ENCODE measurements at regions of chr13 and their contacts with region 1.

Region 1: DNA sequence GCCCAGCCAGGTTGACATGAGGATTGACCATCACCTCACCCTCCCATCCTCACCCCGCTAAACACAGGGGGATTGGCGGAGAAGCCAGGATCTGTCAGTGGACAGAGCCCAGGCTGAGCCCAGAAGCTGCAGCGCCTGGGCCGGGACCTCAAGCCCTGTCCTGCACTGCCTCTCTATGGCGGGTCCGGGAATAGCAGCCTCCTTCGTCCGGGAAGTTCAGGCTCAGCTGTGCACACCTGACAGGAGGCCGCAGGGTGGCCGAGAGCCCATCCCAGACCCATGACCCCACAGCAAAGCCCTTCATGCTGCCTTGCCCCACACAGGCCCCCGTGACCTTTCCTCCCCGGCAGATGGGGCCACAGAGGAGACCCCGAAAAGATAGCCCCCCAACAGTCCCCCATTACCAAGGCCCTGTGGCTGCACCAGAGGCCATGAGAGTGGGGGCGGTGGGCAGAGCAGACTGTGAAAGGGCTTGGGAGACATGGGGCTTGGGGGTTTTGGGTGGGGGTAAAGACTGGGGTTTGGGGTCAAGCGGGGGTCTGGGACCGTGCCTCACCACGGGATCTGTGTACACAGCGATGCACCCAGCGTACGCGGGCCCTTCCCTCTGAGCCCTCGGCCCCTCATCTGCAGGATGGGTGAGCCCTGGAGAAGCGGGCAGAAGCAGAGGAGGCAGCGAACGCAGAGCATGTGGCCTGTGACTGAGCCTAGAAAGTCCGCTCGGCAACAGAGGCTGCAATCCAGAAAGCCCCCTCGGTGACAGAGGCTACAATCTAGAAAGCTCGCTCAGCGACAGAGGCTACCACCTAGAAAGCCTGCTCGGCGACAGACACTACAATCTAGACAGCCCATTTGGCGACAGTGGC is 68.1 kb downstream of the SPACA7 start:
- DNase-seq: peak; percentile 79 to 89
- H3K4me3 ChIP-seq: no peak overlapping the region
- H3K4me3 Mint-ChIP-seq: no peak overlapping the region
- H3K27ac Mint-ChIP-seq: no peak overlapping the region
- H3K4me1 ChIP-seq: peaks cover 17% of the 10 kb centered on the region
- H3K4me1 Mint-ChIP-seq: peaks cover 12% of the 10 kb centered on the region
- H3K27me3 ChIP-seq: no peaks in the 10 kb centered on the region; the same call in none of the 2 replicates
- H3K27me3 Mint-ChIP-seq: peaks cover 12% of the 10 kb centered on the region
- CTCF ChIP-seq: peak; percentile 93 to 96

Region 2: DNA sequence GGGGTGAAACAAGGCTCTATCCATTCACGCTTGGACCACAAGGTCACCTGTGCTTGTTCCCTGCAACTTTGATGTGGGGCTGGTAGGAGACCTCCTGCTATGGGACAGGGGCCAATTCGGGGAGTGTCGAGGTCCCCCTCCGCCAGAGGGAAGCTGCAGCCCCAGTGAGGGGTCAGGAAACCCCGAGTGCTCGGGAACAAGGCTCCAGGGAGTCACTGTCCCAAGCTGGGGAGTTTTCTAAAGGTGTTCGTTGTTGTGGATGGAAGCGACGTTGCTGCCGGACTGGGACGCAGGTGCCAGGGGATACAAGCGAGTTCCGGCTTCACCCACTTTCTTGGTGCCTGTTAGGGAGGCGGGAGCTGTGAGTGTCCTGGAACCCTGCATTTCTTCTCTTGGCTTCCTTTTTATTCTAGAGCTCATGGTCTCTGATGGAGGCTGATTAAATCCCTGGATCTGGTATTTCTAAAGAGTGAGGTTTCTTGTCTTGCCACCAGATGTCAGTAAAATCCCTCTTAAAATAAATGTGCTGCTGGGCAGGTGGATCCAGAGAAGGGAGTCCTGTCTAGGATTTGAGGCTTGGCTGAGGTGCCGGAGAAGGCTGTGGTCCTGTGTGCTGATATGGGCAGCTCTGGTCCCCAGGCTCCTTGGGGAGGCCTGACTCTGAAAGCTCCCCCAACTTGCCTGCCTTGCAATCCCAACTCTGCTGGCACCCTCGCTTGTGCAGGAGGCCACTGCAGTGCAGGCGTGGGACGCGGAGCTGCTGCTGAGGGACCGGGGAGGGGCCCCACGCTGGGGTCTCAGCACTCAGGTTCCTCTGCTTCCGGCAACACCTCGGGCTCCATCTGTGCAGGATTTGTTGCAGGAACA is 969.9 kb before region 1 on chr13:
- CTCF ChIA-PET with region 1: interaction called, 4 read pairs
- POLR2A ChIA-PET with region 1: no interaction called
- intact Hi-C with region 1: loop called (anchors 1 kb)
- DNase-seq: peak in 1 of 2 experiments; percentile 57
- H3K4me3 ChIP-seq: no peak overlapping the region
- H3K4me3 Mint-ChIP-seq: no peak overlapping the region
- H3K27ac Mint-ChIP-seq: no peak overlapping the region
- H3K4me1 ChIP-seq: no peaks in the 10 kb centered on the region
- H3K4me1 Mint-ChIP-seq: no peaks in the 10 kb centered on the region
- H3K27me3 ChIP-seq: no peaks in the 10 kb centered on the region; the same call in none of the 2 replicates
- H3K27me3 Mint-ChIP-seq: peaks cover 27% of the 10 kb centered on the region
- CTCF ChIP-seq: peak; percentile 43 to 62

Region 3: DNA sequence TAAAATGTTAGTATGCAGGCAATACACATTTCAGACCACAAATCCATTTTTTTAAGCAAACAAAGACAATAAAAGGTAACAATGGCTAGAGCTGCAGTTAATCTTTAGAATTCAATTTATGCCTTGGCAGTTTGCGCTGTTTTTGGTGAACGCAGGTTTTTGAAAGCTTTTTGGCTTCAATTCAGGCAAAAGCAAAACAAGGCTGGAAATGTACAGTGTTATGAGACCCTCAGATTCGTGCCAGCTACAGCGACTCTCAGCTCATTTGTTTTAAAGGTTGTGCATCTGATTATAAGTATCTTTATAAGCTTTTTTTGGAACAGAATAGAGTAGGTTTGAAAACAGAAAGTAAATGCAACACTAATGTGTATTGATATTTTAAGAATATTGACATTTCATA is 440.8 kb before region 1 on chr13:
- CTCF ChIA-PET with region 1: no interaction called
- POLR2A ChIA-PET with region 1: no interaction called
- intact Hi-C with region 1: no loop called
- DNase-seq: no peak
- H3K4me3 ChIP-seq: no peak overlapping the region
- H3K4me3 Mint-ChIP-seq: no peak overlapping the region
- H3K27ac Mint-ChIP-seq: no peak overlapping the region
- H3K4me1 ChIP-seq: no peaks in the 10 kb centered on the region
- H3K4me1 Mint-ChIP-seq: no peaks in the 10 kb centered on the region
- H3K27me3 ChIP-seq: no peaks in the 10 kb centered on the region
- H3K27me3 Mint-ChIP-seq: peaks cover 15% of the 10 kb centered on the region
- CTCF ChIP-seq: no peak

Region 4: DNA sequence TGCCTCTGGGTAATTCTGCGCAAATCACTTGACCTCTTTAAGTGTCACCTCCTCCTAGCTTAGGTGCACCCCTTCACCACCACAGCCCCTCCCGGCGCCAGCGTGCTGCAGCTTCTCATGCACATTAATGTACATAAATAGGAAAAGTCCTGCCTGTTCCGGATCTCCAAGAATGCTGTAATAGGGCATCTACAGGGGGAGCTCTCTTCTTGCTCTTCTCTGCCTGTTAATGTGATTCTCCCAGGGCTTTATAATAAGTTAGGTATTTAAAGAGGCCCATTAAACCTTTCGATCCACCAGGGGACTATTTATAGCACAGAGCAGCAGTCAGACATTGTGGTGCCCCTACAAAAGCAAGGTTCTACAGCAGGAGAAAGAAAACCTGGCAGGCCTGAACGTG is 342.0 kb before region 1 on chr13:
- CTCF ChIA-PET with region 1: no interaction called
- POLR2A ChIA-PET with region 1: no interaction called
- intact Hi-C with region 1: loop called (anchors 5 kb)
- DNase-seq: no peak
- H3K4me3 ChIP-seq: no peak overlapping the region
- H3K4me3 Mint-ChIP-seq: no peak overlapping the region
- H3K27ac Mint-ChIP-seq: no peak overlapping the region
- H3K4me1 ChIP-seq: no peaks in the 10 kb centered on the region
- H3K4me1 Mint-ChIP-seq: no peaks in the 10 kb centered on the region
- H3K27me3 ChIP-seq: no peaks in the 10 kb centered on the region
- H3K27me3 Mint-ChIP-seq: peaks cover 6% of the 10 kb centered on the region
- CTCF ChIP-seq: peak in 1 of 2 experiments; percentile 37

Region 5: DNA sequence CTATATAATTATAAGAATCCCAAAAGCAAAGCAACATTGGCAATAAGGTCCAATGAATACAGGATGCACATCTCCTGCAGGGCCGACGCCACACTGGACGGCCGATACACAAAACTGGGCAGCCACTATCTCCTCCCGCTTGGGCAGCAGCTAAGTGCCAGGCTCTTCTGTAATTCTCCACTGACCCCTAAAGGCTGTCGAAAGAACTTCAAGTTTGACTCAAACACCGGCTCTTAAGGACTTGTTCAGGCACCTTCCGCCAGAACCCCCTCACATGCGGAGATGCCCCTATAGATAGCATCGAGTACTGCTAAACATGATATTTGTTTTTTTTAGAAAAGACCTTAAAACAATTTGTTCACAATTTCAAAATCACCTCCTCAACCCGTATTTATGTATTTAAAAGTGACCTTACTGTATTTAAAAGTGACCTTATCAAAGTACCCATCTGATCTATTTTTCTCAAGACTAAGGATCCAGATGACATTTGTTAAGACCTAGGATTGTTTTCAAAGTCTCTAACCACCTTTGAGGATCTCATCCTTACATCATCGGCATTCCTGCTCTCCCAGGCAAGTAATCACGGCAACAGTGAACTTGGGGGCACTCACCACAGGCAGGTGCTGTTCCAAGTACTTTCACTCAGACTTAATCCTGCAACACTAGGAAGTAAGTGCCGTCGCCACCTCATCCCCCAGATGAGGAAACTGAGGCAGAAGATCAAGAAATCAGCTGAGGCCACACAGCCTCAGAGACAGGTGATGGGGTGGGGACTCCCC is 66.0 kb after region 1 on chr13:
- CTCF ChIA-PET with region 1: interaction called, 6 read pairs
- POLR2A ChIA-PET with region 1: no interaction called
- intact Hi-C with region 1: loop called (anchors 2 kb)
- DNase-seq: peak; percentile 53 to 69
- H3K4me3 ChIP-seq: no peak overlapping the region
- H3K4me3 Mint-ChIP-seq: no peak overlapping the region
- H3K27ac Mint-ChIP-seq: peak overlapping the region; percentile 25
- H3K4me1 ChIP-seq: peaks cover 13% of the 10 kb centered on the region
- H3K4me1 Mint-ChIP-seq: peaks cover 5% of the 10 kb centered on the region
- H3K27me3 ChIP-seq: no peaks in the 10 kb centered on the region
- H3K27me3 Mint-ChIP-seq: no peaks in the 10 kb centered on the region
- CTCF ChIP-seq: peak; percentile 57 to 65

Region 6: DNA sequence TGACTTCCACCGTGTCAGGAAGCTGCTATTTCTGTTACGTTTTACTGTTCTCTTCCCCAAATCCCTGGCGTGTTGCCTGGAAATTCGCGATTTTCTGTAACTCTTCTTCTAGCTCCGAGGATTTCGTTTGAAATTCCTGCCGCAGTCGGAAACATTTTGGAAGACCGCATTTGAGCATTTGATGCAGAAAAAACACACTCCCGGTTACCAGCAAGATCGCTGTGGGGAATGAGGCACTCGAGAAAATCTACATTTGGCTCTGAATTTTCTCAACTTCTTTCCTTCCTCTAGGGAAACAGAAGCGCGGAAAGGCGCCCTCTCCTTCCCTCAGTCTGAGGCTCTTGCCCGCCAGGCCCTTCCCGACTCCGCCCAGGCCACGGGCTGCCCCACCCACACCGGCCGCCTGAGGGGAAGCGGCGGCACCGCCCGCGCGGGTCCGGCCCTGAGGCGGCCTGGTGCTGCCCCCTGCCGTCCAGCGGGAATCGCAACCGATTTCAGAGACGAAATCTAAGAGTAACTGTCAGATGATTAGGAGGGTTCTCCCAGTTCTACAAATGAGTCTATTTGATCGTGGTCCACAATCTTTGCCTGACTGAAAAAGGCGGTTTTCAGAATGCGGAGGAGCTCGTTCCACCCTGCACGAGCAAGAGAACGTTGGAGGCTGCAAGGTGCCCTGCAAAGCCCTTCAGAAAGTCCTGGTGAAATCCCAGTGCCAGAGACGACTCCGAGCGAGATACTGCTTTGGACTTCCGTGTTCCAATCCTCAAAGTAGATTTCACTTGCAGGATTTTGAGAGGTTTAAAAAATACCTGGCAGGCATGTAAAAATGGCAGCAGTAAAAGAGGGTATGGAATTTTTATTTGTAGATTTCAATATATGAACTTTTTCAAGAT is 162.1 kb after region 1 on chr13:
- CTCF ChIA-PET with region 1: no interaction called
- POLR2A ChIA-PET with region 1: no interaction called
- intact Hi-C with region 1: loop called (anchors 2 kb)
- DNase-seq: peak; percentile 93 to 97
- H3K4me3 ChIP-seq: peak overlapping the region; percentile 41
- H3K4me3 Mint-ChIP-seq: peak overlapping the region; percentile 73
- H3K27ac Mint-ChIP-seq: peak overlapping the region; percentile 23
- H3K4me1 ChIP-seq: no peaks in the 10 kb centered on the region
- H3K4me1 Mint-ChIP-seq: no peaks in the 10 kb centered on the region
- H3K27me3 ChIP-seq: peaks cover 1% of the 10 kb centered on the region
- H3K27me3 Mint-ChIP-seq: peaks cover 15% of the 10 kb centered on the region
- CTCF ChIP-seq: peak; percentile 85 to 89

Region 7: GRCh38 chr13:113044391-113045114 is 600.3 kb after region 1 on chr13:
- CTCF ChIA-PET with region 1: no interaction called
- POLR2A ChIA-PET with region 1: no interaction called
- intact Hi-C with region 1: no loop called
- DNase-seq: no peak
- H3K4me3 ChIP-seq: no peak overlapping the region
- H3K4me3 Mint-ChIP-seq: no peak overlapping the region
- H3K27ac Mint-ChIP-seq: no peak overlapping the region
- H3K4me1 ChIP-seq: no peaks in the 10 kb centered on the region
- H3K4me1 Mint-ChIP-seq: no peaks in the 10 kb centered on the region
- H3K27me3 ChIP-seq: no peaks in the 10 kb centered on the region
- H3K27me3 Mint-ChIP-seq: no peaks in the 10 kb centered on the region
- CTCF ChIP-seq: no peak